HEK293 (cell line): ENCODE measurements at regions of chr7 and their contacts with region 1.

Region 1: GRCh38 chr7:94289071-94289470 is 105.6 kb upstream of the COL1A2 start:
- H3K4me3 ChIP-seq: no peak overlapping the region
- H3K27ac ChIP-seq: no peak overlapping the region
- H3K4me1 ChIP-seq: no peaks in the 10 kb centered on the region
- CTCF ChIP-seq: peak; percentile 78

Region 2: DNA sequence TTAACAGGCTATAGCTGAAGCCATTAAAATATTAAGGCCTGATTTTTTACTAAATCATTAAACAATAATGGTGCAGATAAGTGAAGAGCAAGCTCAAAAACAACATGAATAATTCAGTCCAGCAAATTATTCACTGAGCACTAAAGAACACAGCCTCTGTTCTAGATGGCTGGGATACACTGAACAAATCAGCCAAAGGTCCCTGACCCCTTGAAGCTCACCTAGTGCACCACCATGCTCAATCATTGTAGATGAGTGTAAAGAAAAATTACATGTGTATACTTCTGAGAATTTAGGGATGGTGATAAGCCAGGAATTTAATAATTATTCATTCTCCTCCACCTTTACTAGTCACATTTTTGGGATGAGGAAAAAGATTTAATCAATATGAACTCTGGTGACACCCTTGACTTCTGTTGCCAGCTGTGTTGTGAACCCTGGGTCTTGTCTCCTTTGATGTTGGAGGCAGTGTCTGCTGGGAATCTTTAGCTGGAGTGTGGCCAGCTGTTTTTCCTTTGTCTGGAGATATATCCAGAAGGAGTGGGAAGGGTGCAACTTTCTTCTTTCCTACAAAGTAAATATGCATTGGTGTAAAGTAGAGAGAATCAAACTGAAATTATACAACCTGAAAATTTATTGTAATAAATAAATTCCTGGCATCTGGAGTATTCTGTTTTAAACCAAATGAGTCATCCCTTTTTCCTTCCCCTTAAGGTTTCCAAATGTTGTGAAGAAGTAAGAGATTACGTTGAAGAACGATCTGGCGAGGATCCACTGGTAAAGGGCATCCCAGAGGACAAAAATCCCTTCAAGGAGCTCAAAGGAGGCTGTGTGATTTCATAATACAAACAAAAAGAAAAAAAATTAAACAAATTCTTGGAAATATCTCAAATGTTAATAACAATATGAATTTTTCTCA is 378.7 kb before region 1 on chr7:
- CTCF ChIA-PET with region 1: interaction called, 13 read pairs
- POLR2A ChIA-PET with region 1: no interaction called
- H3K4me3 ChIP-seq: no peak overlapping the region
- H3K27ac ChIP-seq: no peak overlapping the region
- H3K4me1 ChIP-seq: peaks cover 6% of the 10 kb centered on the region; the same call in 1 of the 2 replicates
- CTCF ChIP-seq: no peak

Region 3: GRCh38 chr7:94276795-94277194 is 12.3 kb before region 1 on chr7:
- CTCF ChIA-PET with region 1: interaction called, 16 read pairs
- POLR2A ChIA-PET with region 1: no interaction called
- H3K4me3 ChIP-seq: no peak overlapping the region
- H3K27ac ChIP-seq: no peak overlapping the region
- H3K4me1 ChIP-seq: no peaks in the 10 kb centered on the region
- CTCF ChIP-seq: peak; percentile 31; the same call in 1 of the 2 replicates

Region 4: GRCh38 chr7:94301024-94301586 is 12.0 kb after region 1 on chr7:
- CTCF ChIA-PET with region 1: interaction called, 10 read pairs
- POLR2A ChIA-PET with region 1: no interaction called
- H3K4me3 ChIP-seq: no peak overlapping the region
- H3K27ac ChIP-seq: no peak overlapping the region
- H3K4me1 ChIP-seq: no peaks in the 10 kb centered on the region; the same call in 1 of the 2 replicates
- CTCF ChIP-seq: no peak

Region 5: DNA sequence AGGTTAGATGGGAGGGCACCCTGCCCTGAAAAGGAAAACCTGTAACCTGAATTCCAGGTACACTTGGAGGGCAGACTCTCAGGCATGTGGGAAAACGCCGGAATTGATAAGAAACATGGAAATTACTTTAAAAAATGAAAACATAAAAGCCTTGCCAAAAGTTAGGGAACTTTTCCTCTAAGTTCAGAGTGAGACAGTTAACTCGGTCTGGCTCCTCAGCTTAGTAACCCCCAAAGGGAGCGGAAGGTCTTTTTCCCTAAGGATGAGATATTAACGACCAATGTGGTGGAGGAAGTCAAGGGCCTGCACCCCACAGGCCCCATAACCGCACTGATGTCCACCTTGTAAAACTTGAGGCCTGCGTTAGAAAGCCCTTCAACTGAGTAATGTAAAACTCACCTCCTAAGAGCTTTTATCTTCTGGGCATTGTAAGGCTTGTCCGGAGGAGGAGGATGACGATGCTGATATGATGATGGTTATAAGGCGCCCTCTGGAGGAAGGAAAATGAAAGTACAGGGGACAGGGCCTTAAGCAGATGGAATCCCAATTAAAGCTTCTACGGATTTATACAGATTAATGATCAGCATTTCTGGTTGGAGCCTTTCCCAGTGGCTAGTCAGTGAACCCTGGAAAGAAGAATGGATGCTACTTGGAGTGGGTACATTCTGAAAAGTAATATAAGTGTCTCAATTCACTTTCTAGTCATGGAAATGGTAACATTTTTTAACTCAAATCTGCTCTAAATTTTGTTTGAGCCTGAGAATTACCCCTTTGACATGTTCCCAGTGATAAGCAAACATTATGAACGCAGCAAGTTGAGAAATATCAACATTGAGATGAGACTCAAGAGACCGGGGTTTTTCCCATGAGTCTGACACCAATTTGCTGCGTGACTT is 106.3 kb after region 1 on chr7:
- CTCF ChIA-PET with region 1: interaction called, 74 read pairs
- POLR2A ChIA-PET with region 1: interaction called, 3 read pairs
- H3K4me3 ChIP-seq: no peak overlapping the region
- H3K27ac ChIP-seq: no peak overlapping the region
- H3K4me1 ChIP-seq: no peaks in the 10 kb centered on the region
- CTCF ChIP-seq: 0 out of 2 replicates have a peak, but pooled peaks have one; percentile 7

Region 6: DNA sequence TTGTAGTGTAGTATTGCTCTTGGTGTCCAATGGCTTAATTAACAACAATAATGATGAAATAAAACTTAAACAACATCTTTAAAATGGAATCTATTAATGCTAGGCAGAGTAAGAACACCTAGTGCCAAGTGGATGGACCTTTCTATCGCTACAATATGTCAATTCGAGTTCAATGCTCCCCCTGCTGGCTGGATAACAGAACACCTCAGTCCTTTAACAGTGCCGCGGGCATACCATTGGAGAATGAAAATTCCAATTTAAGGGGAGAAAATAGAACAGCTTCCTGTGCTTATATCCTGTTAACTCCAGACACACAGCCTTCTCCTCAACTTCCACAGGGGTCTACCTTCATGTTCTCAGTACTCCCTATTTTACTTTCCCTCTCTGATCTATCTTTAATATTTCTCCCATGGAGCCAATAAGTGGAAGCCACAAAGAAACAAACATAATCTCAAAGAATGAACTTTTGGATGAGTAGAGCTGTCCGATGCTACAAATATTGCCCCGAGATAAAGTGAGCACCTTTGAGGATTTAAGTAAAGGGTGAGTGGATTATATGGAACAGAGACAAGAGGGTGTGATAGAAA is 147.0 kb after region 1 on chr7:
- CTCF ChIA-PET with region 1: interaction called, 46 read pairs
- POLR2A ChIA-PET with region 1: no interaction called
- H3K4me3 ChIP-seq: no peak overlapping the region
- H3K27ac ChIP-seq: no peak overlapping the region
- H3K4me1 ChIP-seq: no peaks in the 10 kb centered on the region
- CTCF ChIP-seq: peak; percentile 21; the same call in 1 of the 2 replicates